ENCODE measurements at regions of chr2 and their contacts with region 1.

Region 1: GRCh38 chr2:55862673-55863390 is 60.8 kb downstream of the EFEMP1 start:
- DNase-seq: peak; percentile 99
- H3K4me3 ChIP-seq: no peak overlapping the region
- H3K27ac ChIP-seq: peak overlapping the region; percentile 93
- H3K4me1 ChIP-seq: peaks cover 26% of the 10 kb centered on the region
- H3K27me3 ChIP-seq: no peaks in the 10 kb centered on the region
- CTCF ChIP-seq: no peak

Region 2: GRCh38 chr2:55771612-55772011 is 91.2 kb before region 1 on chr2:
- CTCF ChIA-PET with region 1: no interaction called
- dilution Hi-C with region 1: no loop called
- in situ Hi-C with region 1: no loop called
- intact Hi-C with region 1: loop called (anchors 2 kb)
- DNase-seq: peak; percentile 35
- H3K4me3 ChIP-seq: no peak overlapping the region
- H3K27ac ChIP-seq: no peak overlapping the region
- H3K4me1 ChIP-seq: peaks cover 18% of the 10 kb centered on the region
- H3K27me3 ChIP-seq: no peaks in the 10 kb centered on the region
- CTCF ChIP-seq: peak; percentile 50 to 71

Region 3: GRCh38 chr2:55779459-55780421 is 83.1 kb before region 1 on chr2:
- CTCF ChIA-PET with region 1: no interaction called
- dilution Hi-C with region 1: no loop called
- in situ Hi-C with region 1: no loop called
- intact Hi-C with region 1: loop called (anchors 1 kb)
- DNase-seq: peak; percentile 99
- H3K4me3 ChIP-seq: peak overlapping the region; percentile 15 to 41 (median 38)
- H3K27ac ChIP-seq: peak overlapping the region; percentile 68
- H3K4me1 ChIP-seq: peaks cover 30% of the 10 kb centered on the region
- H3K27me3 ChIP-seq: no peaks in the 10 kb centered on the region
- CTCF ChIP-seq: no peak

Region 4: GRCh38 chr2:55843096-55843993 is 19.5 kb before region 1 on chr2:
- CTCF ChIA-PET with region 1: no interaction called
- dilution Hi-C with region 1: no loop called
- in situ Hi-C with region 1: no loop called
- intact Hi-C with region 1: loop called (anchors 1 kb)
- DNase-seq: peak; percentile 92
- H3K4me3 ChIP-seq: no peak overlapping the region
- H3K27ac ChIP-seq: no peak overlapping the region
- H3K4me1 ChIP-seq: peaks cover 28% of the 10 kb centered on the region
- H3K27me3 ChIP-seq: no peaks in the 10 kb centered on the region
- CTCF ChIP-seq: no peak

Region 5: DNA sequence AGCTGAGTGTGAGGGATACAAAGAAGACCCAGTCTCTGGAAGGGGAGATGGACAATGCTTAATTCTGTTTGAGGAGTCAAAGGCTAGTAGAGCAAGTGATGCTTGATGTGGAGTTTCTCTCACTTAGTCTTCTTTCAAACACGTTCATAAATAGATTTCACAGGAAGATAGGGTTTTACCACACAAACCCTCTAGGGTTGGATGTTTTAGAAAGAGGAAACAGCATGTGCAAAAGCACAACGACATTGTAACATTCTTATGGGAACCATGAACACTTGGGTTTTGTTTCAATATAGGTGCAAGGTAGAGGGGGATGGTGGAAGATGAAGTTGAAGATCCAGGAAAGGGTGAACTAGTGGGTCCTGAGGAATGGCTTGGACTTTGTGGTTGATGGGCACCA is 71.5 kb after region 1 on chr2:
- CTCF ChIA-PET with region 1: no interaction called
- dilution Hi-C with region 1: loop called (anchors 5 kb)
- in situ Hi-C with region 1: no loop called
- intact Hi-C with region 1: no loop called
- DNase-seq: no peak
- H3K4me3 ChIP-seq: no peak overlapping the region
- H3K27ac ChIP-seq: no peak overlapping the region
- H3K4me1 ChIP-seq: no peaks in the 10 kb centered on the region
- H3K27me3 ChIP-seq: no peaks in the 10 kb centered on the region
- CTCF ChIP-seq: no peak